Sigmoid colon (tissue), 7 donors: ENCODE measurements at regions of chr12 and their contacts with region 1.

Region 1: GRCh38 chr12:106078358-106079010 is 60.3 kb downstream of the NUAK1 start:
- DNase-seq: peak; percentile 75
- H3K4me3 ChIP-seq: no peak overlapping the region
- H3K27ac ChIP-seq: peak overlapping the region in 1 of 4 donors; percentile 39
- H3K4me1 ChIP-seq: peaks cover 0 to 49% (median 47%) of the 10 kb centered on the region in 4 donors
- H3K27me3 ChIP-seq: no peaks in the 10 kb centered on the region
- CTCF ChIP-seq: no peak
- EP300 ChIP-seq: no peak
- POLR2A ChIP-seq: no peak

Region 2: GRCh38 chr12:105922670-105923102 is 155.8 kb before region 1 on chr12:
- intact Hi-C with region 1: loop called (anchors 10 kb)
- DNase-seq: no peak
- H3K4me3 ChIP-seq: no peak overlapping the region
- H3K27ac ChIP-seq: peak overlapping the region in 3 of 4 donors; percentile 44 to 73 (median 46)
- H3K4me1 ChIP-seq: peaks cover 0 to 30% (median 21%) of the 10 kb centered on the region in 4 donors
- H3K27me3 ChIP-seq: no peaks in the 10 kb centered on the region
- CTCF ChIP-seq: no peak
- EP300 ChIP-seq: no peak
- POLR2A ChIP-seq: no peak

Region 3: GRCh38 chr12:106096376-106096775 is 17.9 kb after region 1 on chr12:
- intact Hi-C with region 1: no loop called
- DNase-seq: peak; percentile 82
- H3K4me3 ChIP-seq: no peak overlapping the region
- H3K27ac ChIP-seq: peak overlapping the region in 1 of 4 donors; percentile 36
- H3K4me1 ChIP-seq: peaks cover 0 to 7% (median 4%) of the 10 kb centered on the region in 4 donors
- H3K27me3 ChIP-seq: no peaks in the 10 kb centered on the region
- CTCF ChIP-seq: no peak
- EP300 ChIP-seq: no peak
- POLR2A ChIP-seq: no peak

Region 4: DNA sequence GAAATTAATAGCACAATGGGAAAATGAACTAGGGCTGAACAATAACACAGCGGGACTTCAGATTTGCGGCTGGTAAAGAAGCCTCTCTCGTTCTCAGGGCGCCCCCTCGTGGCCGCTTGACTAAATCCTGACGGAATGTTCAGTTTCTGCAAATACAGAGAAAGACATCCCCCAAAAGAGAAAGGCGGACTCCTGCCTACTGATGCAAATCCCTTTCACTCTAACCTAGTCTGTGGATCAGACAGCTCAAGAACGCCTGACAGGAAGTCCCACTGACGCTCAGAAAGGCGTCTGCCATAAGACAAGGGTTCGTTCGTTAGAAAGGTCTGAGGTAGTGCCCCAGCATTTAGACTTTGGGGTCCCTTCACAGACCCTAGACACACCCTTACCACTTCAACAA is 57.8 kb after region 1 on chr12:
- intact Hi-C with region 1: no loop called
- DNase-seq: peak; percentile 93
- H3K4me3 ChIP-seq: peak overlapping the region in 3 of 4 donors; percentile 13 to 77 (median 70)
- H3K27ac ChIP-seq: peak overlapping the region; percentile 14 to 90 (median 74)
- H3K4me1 ChIP-seq: peaks cover 0 to 76% (median 36%) of the 10 kb centered on the region in 4 donors
- H3K27me3 ChIP-seq: no peaks in the 10 kb centered on the region
- CTCF ChIP-seq: peak; percentile 71 to 82 (median 80)
- EP300 ChIP-seq: no peak
- POLR2A ChIP-seq: no peak